B cell (primary cell): ENCODE measurements at regions of chr1 and their contacts with region 1.

Region 1: DNA sequence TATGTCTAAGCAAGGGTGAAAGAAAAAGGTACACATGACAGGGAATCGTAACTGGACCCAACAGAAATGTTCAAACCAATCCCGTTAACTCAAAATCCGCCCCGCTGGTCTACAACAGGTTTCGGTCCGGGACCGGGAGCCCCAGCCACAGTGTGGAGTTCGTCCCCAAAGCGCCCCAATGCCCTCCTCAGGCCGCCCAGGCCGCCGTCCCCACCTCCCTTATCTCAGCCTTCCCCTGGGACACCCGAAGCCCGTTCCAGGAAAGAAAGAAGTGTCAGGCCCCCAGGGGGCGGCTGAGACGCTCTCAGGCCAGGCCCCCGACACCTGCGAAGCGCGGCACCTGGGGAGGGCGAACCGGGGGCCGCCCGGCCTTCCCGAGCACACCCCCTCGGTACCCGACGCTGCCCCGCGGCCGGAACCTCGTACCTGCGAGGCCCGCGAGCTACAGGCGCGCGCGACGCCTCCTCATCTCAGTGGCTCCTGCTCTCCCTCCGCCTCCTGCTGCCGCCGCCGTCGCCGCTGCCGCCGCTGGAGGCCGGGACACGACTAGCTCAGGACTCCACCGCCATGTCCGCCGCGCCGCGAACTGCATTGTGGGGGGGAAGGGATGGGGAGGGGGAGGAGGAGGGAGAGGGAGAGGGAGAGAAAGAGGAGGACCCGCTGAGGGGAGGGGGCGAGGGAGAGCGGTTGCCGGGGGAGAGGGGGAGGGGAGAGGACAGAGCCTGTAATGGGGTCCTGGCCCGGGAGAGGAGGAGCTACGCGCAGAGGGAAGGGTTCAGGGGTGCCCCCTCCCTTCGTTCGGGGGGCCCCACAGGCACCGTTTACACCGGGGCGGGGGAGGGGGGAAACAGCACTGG is at the start of gene TUT4:
- DNase-seq: peak; percentile 86
- ATAC-seq: peak; percentile 53
- H3K4me3 ChIP-seq: peak within 1 kb of the TSS; percentile 85 to 95 (median 92)
- H3K4me3 Mint-ChIP-seq: no peak within 1 kb of the TSS
- H3K27ac ChIP-seq: peak within 1 kb of the TSS; percentile 94
- H3K27ac Mint-ChIP-seq: peak within 1 kb of the TSS; percentile 68
- H3K4me1 ChIP-seq: peaks cover 25 to 31% of the 10 kb centered on the region in 2 donors
- H3K4me1 Mint-ChIP-seq: peaks cover 37% of the 10 kb centered on the region
- H3K27me3 ChIP-seq: no peaks in the 10 kb centered on the region
- H3K27me3 Mint-ChIP-seq: no peaks in the 10 kb centered on the region
- CTCF ChIP-seq: no peak
- total RNA-seq, gene TUT4: 248 and 265 TPM in 2 replicates

Region 2: GRCh38 chr1:51878616-51879336 is 674.0 kb before region 1 on chr1 and contains the start of gene NRDC:
- CTCF ChIA-PET with region 1: no interaction called
- POLR2A ChIA-PET with region 1: no interaction called
- intact Hi-C with region 1: loop called (anchors 5 kb)
- DNase-seq: peak; percentile 100
- ATAC-seq: peak; percentile 89
- H3K4me3 ChIP-seq: peak within 1 kb of the TSS; percentile 65 to 99 (median 95)
- H3K4me3 Mint-ChIP-seq: no peak within 1 kb of the TSS
- H3K27ac ChIP-seq: peak within 1 kb of the TSS; percentile 84 to 98
- H3K27ac Mint-ChIP-seq: no peak within 1 kb of the TSS
- H3K4me1 ChIP-seq: peaks cover 25 to 42% of the 10 kb centered on the region in 2 donors
- H3K4me1 Mint-ChIP-seq: peaks cover 31% of the 10 kb centered on the region
- H3K27me3 ChIP-seq: no peaks in the 10 kb centered on the region
- H3K27me3 Mint-ChIP-seq: peaks cover 4% of the 10 kb centered on the region
- CTCF ChIP-seq: no peak
- total RNA-seq, gene NRDC: 154 and 167 TPM in 2 replicates

Region 3: GRCh38 chr1:52404116-52404986 is 148.4 kb before region 1 on chr1 and contains the starts of genes ORC1 and PRPF38A:
- CTCF ChIA-PET with region 1: no interaction called
- POLR2A ChIA-PET with region 1: interaction called, 12 read pairs
- intact Hi-C with region 1: loop called (anchors 1 kb)
- DNase-seq: peak; percentile 98
- ATAC-seq: peak; percentile 98
- H3K4me3 ChIP-seq: peak within 1 kb of the TSS; percentile 76 to 99 (median 95)
- H3K4me3 Mint-ChIP-seq: peak within 1 kb of the TSS; percentile 100
- H3K27ac ChIP-seq: peak within 1 kb of the TSS; percentile 91 to 95
- H3K27ac Mint-ChIP-seq: peak within 1 kb of the TSS; percentile 96
- H3K4me1 ChIP-seq: peaks cover 15 to 22% of the 10 kb centered on the region in 2 donors
- H3K4me1 Mint-ChIP-seq: peaks cover 32% of the 10 kb centered on the region
- H3K27me3 ChIP-seq: no peaks in the 10 kb centered on the region
- H3K27me3 Mint-ChIP-seq: no peaks in the 10 kb centered on the region
- CTCF ChIP-seq: peak; percentile 60
- total RNA-seq, gene ORC1: 1.3 TPM in 2 replicates
- total RNA-seq, gene PRPF38A: 68.1 and 69.8 TPM in 2 replicates

Region 4: GRCh38 chr1:52542085-52542688 is 10.5 kb before region 1 on chr1:
- CTCF ChIA-PET with region 1: no interaction called
- POLR2A ChIA-PET with region 1: interaction called, 10 read pairs
- intact Hi-C with region 1: no loop called
- DNase-seq: no peak
- ATAC-seq: no peak
- H3K4me3 ChIP-seq: no peak overlapping the region
- H3K4me3 Mint-ChIP-seq: no peak overlapping the region
- H3K27ac ChIP-seq: no peak overlapping the region
- H3K27ac Mint-ChIP-seq: no peak overlapping the region
- H3K4me1 ChIP-seq: peaks cover 0 to 6% of the 10 kb centered on the region in 2 donors
- H3K4me1 Mint-ChIP-seq: peaks cover 35% of the 10 kb centered on the region
- H3K27me3 ChIP-seq: no peaks in the 10 kb centered on the region
- H3K27me3 Mint-ChIP-seq: no peaks in the 10 kb centered on the region
- CTCF ChIP-seq: no peak

Region 5: GRCh38 chr1:52627028-52627427 is 74.3 kb after region 1 on chr1:
- CTCF ChIA-PET with region 1: interaction called, 18 read pairs
- POLR2A ChIA-PET with region 1: interaction called, 82 read pairs
- intact Hi-C with region 1: no loop called
- DNase-seq: no peak
- ATAC-seq: no peak
- H3K4me3 ChIP-seq: no peak overlapping the region
- H3K4me3 Mint-ChIP-seq: no peak overlapping the region
- H3K27ac ChIP-seq: no peak overlapping the region
- H3K27ac Mint-ChIP-seq: no peak overlapping the region
- H3K4me1 ChIP-seq: peaks cover 40 to 47% of the 10 kb centered on the region in 2 donors
- H3K4me1 Mint-ChIP-seq: peaks cover 51% of the 10 kb centered on the region
- H3K27me3 ChIP-seq: no peaks in the 10 kb centered on the region
- H3K27me3 Mint-ChIP-seq: no peaks in the 10 kb centered on the region
- CTCF ChIP-seq: no peak

Region 6: DNA sequence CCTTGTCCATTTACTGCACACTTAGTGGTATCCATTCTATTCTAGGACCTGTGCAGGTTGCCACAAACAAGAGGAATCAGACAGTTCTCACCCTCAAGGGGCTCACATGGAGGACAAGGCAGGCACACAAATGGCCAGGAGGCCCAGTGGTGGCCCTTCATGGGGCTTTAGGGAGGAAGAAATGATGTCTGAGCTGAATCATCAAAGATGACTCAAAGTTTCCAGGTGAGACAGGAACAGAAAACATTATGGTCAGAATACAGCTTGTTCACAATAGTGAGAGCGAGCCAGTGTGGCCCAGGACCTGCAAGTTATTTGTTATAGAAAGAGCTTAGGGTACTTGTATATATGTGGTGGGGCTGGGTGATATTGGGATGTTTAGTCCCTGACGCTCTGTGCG is 106.6 kb after region 1 on chr1:
- CTCF ChIA-PET with region 1: interaction called, 3 read pairs
- POLR2A ChIA-PET with region 1: interaction called, 13 read pairs
- intact Hi-C with region 1: no loop called
- DNase-seq: no peak
- ATAC-seq: peak; percentile 60
- H3K4me3 ChIP-seq: no peak overlapping the region
- H3K4me3 Mint-ChIP-seq: peak overlapping the region; percentile 46
- H3K27ac ChIP-seq: peak overlapping the region in 1 of 2 donors; percentile 21
- H3K27ac Mint-ChIP-seq: peak overlapping the region; percentile 86
- H3K4me1 ChIP-seq: no peaks in the 10 kb centered on the region
- H3K4me1 Mint-ChIP-seq: peaks cover 28% of the 10 kb centered on the region
- H3K27me3 ChIP-seq: no peaks in the 10 kb centered on the region
- H3K27me3 Mint-ChIP-seq: no peaks in the 10 kb centered on the region
- CTCF ChIP-seq: no peak

Region 7: DNA sequence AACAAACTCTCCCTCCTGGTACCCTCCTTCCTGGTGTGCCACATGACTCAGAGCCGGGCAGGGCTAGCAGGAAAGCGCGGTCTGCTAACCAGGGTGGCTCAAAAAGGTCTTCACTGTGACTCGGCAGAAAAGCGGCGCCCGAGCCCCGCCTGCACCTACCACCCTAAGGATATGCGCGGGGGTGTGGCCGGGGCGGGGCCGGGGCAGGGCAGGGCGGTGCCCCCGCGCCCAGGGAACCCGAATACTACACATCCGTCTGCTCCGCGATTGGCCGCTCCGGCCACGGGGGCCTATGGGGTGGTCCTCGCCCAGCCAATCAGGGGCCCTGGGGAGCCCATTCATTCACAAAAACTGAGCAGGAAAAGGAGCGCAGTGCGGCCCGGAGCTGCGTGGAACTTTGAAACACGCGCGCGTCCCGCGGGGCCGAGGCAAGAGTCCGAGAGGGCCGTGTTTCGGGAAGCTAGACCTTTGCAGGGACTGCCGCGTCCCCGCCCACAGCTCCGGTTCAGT is 773.4 kb after region 1 on chr1:
- CTCF ChIA-PET with region 1: no interaction called
- POLR2A ChIA-PET with region 1: no interaction called
- intact Hi-C with region 1: no loop called
- DNase-seq: peak; percentile 92
- ATAC-seq: peak; percentile 88
- H3K4me3 ChIP-seq: peak overlapping the region in 4 of 5 experiments; percentile 80 to 96 (median 86)
- H3K4me3 Mint-ChIP-seq: peak overlapping the region; percentile 97
- H3K27ac ChIP-seq: peak overlapping the region in 1 of 2 donors; percentile 21
- H3K27ac Mint-ChIP-seq: peak overlapping the region; percentile 91
- H3K4me1 ChIP-seq: peaks cover 6 to 25% of the 10 kb centered on the region in 2 donors
- H3K4me1 Mint-ChIP-seq: peaks cover 24% of the 10 kb centered on the region
- H3K27me3 ChIP-seq: no peaks in the 10 kb centered on the region
- H3K27me3 Mint-ChIP-seq: no peaks in the 10 kb centered on the region
- CTCF ChIP-seq: no peak